ENCODE measurements at regions of chr1 and their contacts with region 1.

Region 1: DNA sequence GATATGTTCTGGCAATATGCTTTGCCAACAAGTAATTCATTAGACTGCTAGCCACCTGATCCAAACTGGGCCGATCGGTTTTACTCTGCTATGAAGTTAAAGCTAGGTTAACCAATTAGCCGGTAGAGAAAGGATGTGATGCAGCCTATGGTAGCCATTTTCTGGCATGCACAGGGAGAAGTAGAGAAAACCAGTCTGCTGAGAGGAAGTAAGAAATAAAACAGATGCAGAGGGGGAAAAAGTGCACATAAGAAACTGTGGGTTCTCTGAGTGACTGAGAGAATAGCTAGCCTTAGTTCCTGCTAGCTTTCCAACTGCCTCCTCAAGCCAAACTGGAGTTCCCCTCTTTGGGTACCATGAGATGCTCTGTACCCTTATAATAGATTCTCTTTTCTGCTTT is 52.8 kb downstream of the ARID4B start:
- DNase-seq: peak in 2 of 9 experiments; percentile 17 to 51
- ATAC-seq: peak; percentile 53
- H3K4me3 ChIP-seq: no peak overlapping the region
- H3K4me3 Mint-ChIP-seq: peak overlapping the region; percentile 23
- H3K27ac ChIP-seq: peak overlapping the region in 1 of 2 experiments; percentile 34
- H3K27ac Mint-ChIP-seq: peak overlapping the region; percentile 57
- H3K4me1 ChIP-seq: peaks cover 53% of the 10 kb centered on the region
- H3K4me1 Mint-ChIP-seq: peaks cover 80% of the 10 kb centered on the region
- H3K27me3 ChIP-seq: no peaks in the 10 kb centered on the region
- H3K27me3 Mint-ChIP-seq: no peaks in the 10 kb centered on the region
- CTCF ChIP-seq: no peak

Region 2: GRCh38 chr1:235259133-235259778 is 16.0 kb before region 1 on chr1:
- CTCF ChIA-PET with region 1: interaction called, 4 read pairs
- POLR2A ChIA-PET with region 1: interaction called, 5 read pairs
- intact Hi-C with region 1: loop called in 1 of 2 experiments (anchors 2 kb)
- DNase-seq: peak in 2 of 9 experiments; percentile 21 to 57
- ATAC-seq: peak; percentile 48
- H3K4me3 ChIP-seq: no peak overlapping the region
- H3K4me3 Mint-ChIP-seq: no peak overlapping the region
- H3K27ac ChIP-seq: peak overlapping the region in 1 of 2 experiments; percentile 51
- H3K27ac Mint-ChIP-seq: peak overlapping the region; percentile 42
- H3K4me1 ChIP-seq: peaks cover 47% of the 10 kb centered on the region
- H3K4me1 Mint-ChIP-seq: peaks cover 60% of the 10 kb centered on the region
- H3K27me3 ChIP-seq: no peaks in the 10 kb centered on the region
- H3K27me3 Mint-ChIP-seq: no peaks in the 10 kb centered on the region
- CTCF ChIP-seq: no peak

Region 3: GRCh38 chr1:235317168-235317567 is 41.9 kb after region 1 on chr1:
- CTCF ChIA-PET with region 1: no interaction called
- POLR2A ChIA-PET with region 1: no interaction called
- intact Hi-C with region 1: loop called in 1 of 2 experiments (anchors 5 kb)
- DNase-seq: no peak
- ATAC-seq: no peak
- H3K4me3 ChIP-seq: no peak overlapping the region
- H3K4me3 Mint-ChIP-seq: no peak overlapping the region
- H3K27ac ChIP-seq: no peak overlapping the region
- H3K27ac Mint-ChIP-seq: no peak overlapping the region
- H3K4me1 ChIP-seq: peaks cover 64% of the 10 kb centered on the region
- H3K4me1 Mint-ChIP-seq: peaks cover 80% of the 10 kb centered on the region
- H3K27me3 ChIP-seq: no peaks in the 10 kb centered on the region
- H3K27me3 Mint-ChIP-seq: no peaks in the 10 kb centered on the region
- CTCF ChIP-seq: no peak

Region 4: GRCh38 chr1:235357485-235358378 is 82.5 kb after region 1 on chr1:
- CTCF ChIA-PET with region 1: no interaction called
- POLR2A ChIA-PET with region 1: no interaction called
- intact Hi-C with region 1: no loop called
- DNase-seq: no peak
- ATAC-seq: no peak
- H3K4me3 ChIP-seq: no peak overlapping the region
- H3K4me3 Mint-ChIP-seq: no peak overlapping the region
- H3K27ac ChIP-seq: no peak overlapping the region
- H3K27ac Mint-ChIP-seq: no peak overlapping the region
- H3K4me1 ChIP-seq: no peaks in the 10 kb centered on the region
- H3K4me1 Mint-ChIP-seq: no peaks in the 10 kb centered on the region
- H3K27me3 ChIP-seq: no peaks in the 10 kb centered on the region
- H3K27me3 Mint-ChIP-seq: no peaks in the 10 kb centered on the region
- CTCF ChIP-seq: no peak